ENCODE measurements at regions of chr2 and their contacts with region 1.

Region 1: DNA sequence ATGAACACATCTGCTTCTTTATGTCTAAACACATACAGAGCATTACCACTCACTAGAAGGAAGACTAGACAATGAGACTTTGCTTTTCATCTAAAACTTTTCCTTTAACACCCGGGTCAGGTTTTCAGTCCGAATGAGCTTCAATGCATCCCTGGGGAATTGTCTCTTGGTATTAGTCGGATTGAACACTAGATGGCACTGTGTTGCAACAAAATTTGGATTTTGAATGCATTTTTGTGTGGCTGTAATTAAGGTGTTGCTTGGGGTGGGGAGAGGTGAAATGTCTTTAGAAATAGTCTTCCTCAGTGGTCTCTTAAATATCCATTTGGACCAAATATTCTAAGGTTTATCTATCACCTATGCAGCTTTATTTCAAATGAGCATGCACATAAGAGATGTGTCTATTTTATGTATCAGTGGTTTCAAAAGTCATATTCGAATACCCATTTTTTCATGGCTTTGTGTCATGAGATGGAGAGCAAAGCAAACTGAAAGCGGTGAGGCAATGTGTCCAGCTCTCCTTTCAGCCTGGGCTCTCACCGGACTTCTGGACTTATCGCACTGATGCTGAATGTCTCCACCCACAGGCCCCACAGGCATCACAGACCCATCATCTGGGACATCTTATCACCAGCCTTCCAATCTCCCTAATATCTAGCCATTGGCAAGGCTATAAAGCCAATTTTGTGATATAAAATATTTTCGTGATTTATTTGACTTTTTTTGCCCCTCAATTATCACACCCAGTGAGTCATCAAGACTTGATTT is 510.3 kb downstream of the RNF144A start:
- DNase-seq: peak in 1 of 2 donors; percentile 52
- ATAC-seq: peak in 5 of 8 donors; percentile 34 to 54 (median 43)
- H3K4me3 ChIP-seq: no peak overlapping the region
- H3K27ac ChIP-seq: no peak overlapping the region
- H3K4me1 ChIP-seq: peaks cover 0 to 38% (median 3%) of the 10 kb centered on the region in 9 donors
- H3K27me3 ChIP-seq: peaks cover 0 to 62% (median 32%) of the 10 kb centered on the region in 7 donors
- CTCF ChIP-seq: peak; percentile 54 to 86 (median 76)

Region 2: GRCh38 chr2:7203055-7203467 is 224.4 kb before region 1 on chr2:
- intact Hi-C with region 1: loop called in 2 of 10 experiments (anchors 10 kb)
- DNase-seq: peak in 1 of 2 donors; percentile 38
- ATAC-seq: peak in 5 of 8 donors; percentile 34 to 64 (median 51)
- H3K4me3 ChIP-seq: no peak overlapping the region
- H3K27ac ChIP-seq: no peak overlapping the region
- H3K4me1 ChIP-seq: no peaks in the 10 kb centered on the region
- H3K27me3 ChIP-seq: no peaks in the 10 kb centered on the region
- CTCF ChIP-seq: peak; percentile 71 to 96 (median 89)

Region 3: DNA sequence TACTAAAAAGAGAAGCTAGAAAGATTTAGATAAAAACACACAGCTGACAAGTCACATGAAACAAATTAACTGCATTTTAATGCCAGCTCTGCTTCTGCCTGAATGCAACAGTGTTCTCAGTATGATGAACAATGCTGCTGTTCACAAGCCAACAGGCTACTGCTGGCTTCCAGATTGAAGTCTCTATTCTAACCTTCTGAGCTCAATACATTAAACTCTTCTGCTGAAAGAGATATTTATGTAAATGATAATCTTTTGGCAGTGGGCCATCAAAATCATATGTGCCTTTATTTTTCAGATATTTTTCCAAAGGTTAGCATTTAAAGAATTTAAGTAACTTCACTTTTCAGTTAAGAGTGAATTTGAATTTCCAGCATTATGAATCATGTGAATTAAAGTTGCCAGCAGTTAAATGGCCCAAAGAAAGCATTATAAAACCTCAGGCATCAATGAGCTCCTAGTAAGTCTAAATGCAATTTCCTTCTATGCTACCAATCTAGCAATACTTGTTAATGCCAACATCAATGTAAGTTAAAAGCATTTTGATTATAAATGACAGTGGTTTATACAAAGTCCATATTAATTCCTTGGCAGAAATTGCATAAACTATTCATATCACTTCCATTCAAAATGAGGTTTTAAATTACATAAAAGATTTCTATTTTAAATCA is 1326.8 kb after region 1 on chr2:
- intact Hi-C with region 1: loop called in 1 of 10 experiments (anchors 10 kb)
- DNase-seq: no peak
- ATAC-seq: peak in 5 of 8 donors; percentile 56 to 87 (median 78)
- H3K4me3 ChIP-seq: no peak overlapping the region
- H3K27ac ChIP-seq: peak overlapping the region in 2 of 10 donors; percentile 11 to 26
- H3K4me1 ChIP-seq: peaks cover 0 to 26% (median 8%) of the 10 kb centered on the region in 9 donors
- H3K27me3 ChIP-seq: no peaks in the 10 kb centered on the region
- CTCF ChIP-seq: no peak

Region 4: GRCh38 chr2:8761529-8762164 is 1334.2 kb after region 1 on chr2:
- intact Hi-C with region 1: loop called in 2 of 10 experiments (anchors 10 kb)
- DNase-seq: no peak
- ATAC-seq: no peak
- H3K4me3 ChIP-seq: no peak overlapping the region
- H3K27ac ChIP-seq: no peak overlapping the region
- H3K4me1 ChIP-seq: peaks cover 0 to 14% (median 0%) of the 10 kb centered on the region in 9 donors
- H3K27me3 ChIP-seq: no peaks in the 10 kb centered on the region
- CTCF ChIP-seq: peak; percentile 5 to 71 (median 58)

Measured in heart right ventricle (tissue), 16 donors.